ENCODE measurements at regions of chr3 and their contacts with region 1.

Region 1: GRCh38 chr3:12984023-12984823 is 89.0 kb downstream of the IQSEC1 start:
- DNase-seq: peak; percentile 80
- ATAC-seq: peak; percentile 89
- H3K4me3 Mint-ChIP-seq: no peak overlapping the region
- H3K27ac Mint-ChIP-seq: peak overlapping the region; percentile 60
- H3K4me1 Mint-ChIP-seq: peaks cover 37% of the 10 kb centered on the region
- H3K27me3 Mint-ChIP-seq: no peaks in the 10 kb centered on the region; the same call in 1 of the 2 replicates
- CTCF ChIP-seq: peak; percentile 62

Region 2: DNA sequence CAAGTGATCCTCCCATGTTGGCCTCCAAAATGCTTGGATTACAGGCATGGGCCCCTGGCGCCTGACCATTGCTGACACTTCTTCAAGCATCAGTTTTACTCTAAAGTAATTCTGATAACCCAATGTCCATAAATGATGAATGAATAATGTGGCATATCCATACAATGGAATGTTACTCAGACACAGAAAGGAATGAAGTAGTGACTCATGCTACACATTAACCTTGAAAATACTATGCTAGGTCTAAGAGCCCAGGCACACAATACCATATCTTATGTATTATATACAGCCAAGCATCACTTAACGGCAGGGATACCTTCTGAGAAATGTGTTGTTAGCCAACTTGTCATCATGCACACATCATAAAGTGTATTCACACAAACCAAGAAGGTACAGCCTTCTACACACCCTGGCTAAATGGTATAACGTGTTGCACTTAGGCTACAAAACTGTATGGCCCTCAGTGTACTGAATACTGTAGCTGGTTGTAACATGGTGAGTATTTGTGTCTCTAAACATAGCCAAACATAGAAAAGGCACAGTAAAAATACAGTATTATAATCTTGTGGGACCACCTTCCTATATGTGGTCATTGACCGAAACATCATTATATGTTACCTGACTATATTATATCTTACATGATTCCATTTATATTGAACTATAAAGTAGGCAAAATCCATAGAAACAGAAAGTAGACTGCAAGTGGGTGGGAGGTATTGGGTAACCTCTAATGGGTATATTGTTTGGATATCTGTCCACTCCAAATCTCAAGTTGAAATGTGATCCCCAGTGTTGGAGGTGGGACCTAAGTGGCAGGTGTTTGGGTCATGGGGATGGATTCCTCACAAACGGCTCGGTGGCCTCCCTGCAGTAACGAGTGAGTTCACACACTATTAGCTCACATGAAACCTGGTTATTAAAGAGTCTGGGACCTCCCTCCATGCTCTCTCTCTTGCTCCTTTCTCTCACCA is 395.9 kb before region 1 on chr3:
- CTCF ChIA-PET with region 1: no interaction called
- POLR2A ChIA-PET with region 1: no interaction called
- DNase-seq: no peak
- ATAC-seq: no peak
- H3K4me3 Mint-ChIP-seq: no peak overlapping the region
- H3K27ac Mint-ChIP-seq: no peak overlapping the region
- H3K4me1 Mint-ChIP-seq: 0 out of 2 replicates have a peak, but pooled peaks cover 3% of the 10 kb centered on the region
- H3K27me3 Mint-ChIP-seq: no peaks in the 10 kb centered on the region
- CTCF ChIP-seq: no peak

Region 3: DNA sequence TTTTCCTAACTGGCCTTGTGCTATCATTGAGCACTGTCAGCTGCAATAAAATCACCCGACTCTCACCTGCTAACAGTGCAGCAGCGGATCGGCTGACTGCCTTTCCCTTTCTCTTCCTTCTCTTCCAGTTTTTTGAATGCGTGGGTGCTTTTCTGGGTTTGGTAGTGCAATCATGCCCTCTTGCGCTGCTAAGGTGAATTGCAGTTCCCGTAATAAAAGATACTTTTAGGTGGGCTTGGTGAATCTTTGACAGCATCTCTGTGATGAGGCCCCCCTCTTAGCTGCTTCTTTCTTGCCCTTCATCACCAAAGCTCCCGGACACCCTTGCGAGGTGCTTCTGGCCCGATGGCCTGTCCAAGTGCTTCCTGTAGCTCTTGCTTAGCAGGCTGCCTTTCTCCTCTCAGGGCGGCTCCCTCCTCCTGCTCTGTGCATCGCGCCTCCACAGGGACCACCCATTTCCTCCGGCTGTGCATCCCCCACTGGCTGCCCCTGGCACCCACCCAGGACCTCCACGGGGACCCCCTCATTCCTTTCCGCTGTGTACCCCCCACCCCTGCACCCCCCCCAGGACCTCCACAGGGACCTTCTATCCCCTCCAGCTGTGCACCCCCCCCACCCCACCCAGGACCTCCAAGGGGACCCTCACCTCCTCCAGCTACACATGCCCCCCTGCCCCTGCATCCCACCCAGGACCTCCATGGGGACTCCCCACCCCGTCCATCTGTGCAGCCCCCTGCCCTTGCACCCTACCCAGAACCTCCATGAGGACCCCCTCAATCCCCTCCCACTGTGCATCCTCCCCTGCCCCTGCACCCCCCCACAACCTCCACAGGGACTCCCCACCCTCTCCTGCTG is 92.0 kb before region 1 on chr3:
- CTCF ChIA-PET with region 1: interaction called, 21 read pairs
- POLR2A ChIA-PET with region 1: no interaction called
- DNase-seq: peak; percentile 50
- ATAC-seq: peak; percentile 54
- H3K4me3 Mint-ChIP-seq: no peak overlapping the region
- H3K27ac Mint-ChIP-seq: no peak overlapping the region
- H3K4me1 Mint-ChIP-seq: peaks cover 6% of the 10 kb centered on the region; the same call in 1 of the 2 replicates
- H3K27me3 Mint-ChIP-seq: peaks cover 47% of the 10 kb centered on the region
- CTCF ChIP-seq: peak; percentile 77

Region 4: DNA sequence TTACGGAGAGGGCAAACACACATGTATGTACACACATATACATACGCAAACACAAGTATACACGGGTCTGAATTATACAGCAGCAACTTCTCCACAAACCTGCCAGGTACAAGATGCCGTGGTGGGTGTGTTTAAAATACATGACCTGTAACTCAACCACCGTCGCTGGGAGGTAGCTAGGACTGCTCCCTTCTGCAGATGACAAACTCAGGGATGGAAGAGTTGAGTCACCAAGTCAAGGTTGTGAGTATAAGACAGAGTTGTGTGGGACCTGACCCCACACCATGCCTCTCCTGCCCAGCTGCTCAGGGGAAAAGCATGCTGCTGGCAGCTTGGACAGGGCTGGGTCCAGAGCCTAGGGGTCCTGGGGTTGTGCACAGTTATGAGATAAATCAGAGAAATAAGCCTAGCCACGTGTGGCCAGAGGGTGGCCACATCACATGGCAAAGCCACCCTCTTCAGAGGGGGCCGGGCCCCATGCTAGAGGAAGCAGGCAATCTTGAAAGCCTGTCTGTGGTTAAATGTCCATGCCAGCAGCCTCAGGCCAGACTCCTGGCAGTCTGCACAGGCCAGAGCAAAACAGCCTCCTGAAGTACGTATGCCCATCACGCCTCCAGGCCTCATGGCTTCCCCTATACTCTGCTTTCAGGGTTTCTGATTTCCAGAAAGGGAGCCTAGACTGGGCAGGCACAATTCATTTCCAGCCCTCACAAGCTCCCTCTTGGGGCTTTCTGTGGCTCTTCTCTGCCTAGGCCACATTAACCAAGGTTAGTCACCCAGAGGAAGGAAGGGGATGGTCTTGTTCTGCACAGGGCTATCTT is 35.1 kb before region 1 on chr3:
- CTCF ChIA-PET with region 1: interaction called, 11 read pairs
- POLR2A ChIA-PET with region 1: no interaction called
- DNase-seq: no peak
- ATAC-seq: peak; percentile 15; the same call in 1 of the 2 replicates
- H3K4me3 Mint-ChIP-seq: no peak overlapping the region
- H3K27ac Mint-ChIP-seq: no peak overlapping the region
- H3K4me1 Mint-ChIP-seq: peaks cover 12% of the 10 kb centered on the region
- H3K27me3 Mint-ChIP-seq: no peaks in the 10 kb centered on the region
- CTCF ChIP-seq: no peak

Region 5: GRCh38 chr3:12967606-12968351 is 16.4 kb before region 1 on chr3:
- CTCF ChIA-PET with region 1: interaction called, 20 read pairs
- POLR2A ChIA-PET with region 1: interaction called, 5 read pairs
- DNase-seq: peak; percentile 84
- ATAC-seq: peak; percentile 92
- H3K4me3 Mint-ChIP-seq: peak overlapping the region; percentile 64
- H3K27ac Mint-ChIP-seq: 0 out of 2 replicates have a peak overlapping the region, but pooled peaks have one; percentile 15
- H3K4me1 Mint-ChIP-seq: peaks cover 31% of the 10 kb centered on the region
- H3K27me3 Mint-ChIP-seq: peaks cover 25% of the 10 kb centered on the region
- CTCF ChIP-seq: no peak

Region 6: GRCh38 chr3:13004376-13004775 is 20.2 kb after region 1 on chr3:
- CTCF ChIA-PET with region 1: interaction called, 14 read pairs
- POLR2A ChIA-PET with region 1: no interaction called
- DNase-seq: no peak
- ATAC-seq: peak; percentile 56; the same call in 1 of the 2 replicates
- H3K4me3 Mint-ChIP-seq: no peak overlapping the region
- H3K27ac Mint-ChIP-seq: no peak overlapping the region
- H3K4me1 Mint-ChIP-seq: peaks cover 28% of the 10 kb centered on the region
- H3K27me3 Mint-ChIP-seq: 0 out of 2 replicates have a peak, but pooled peaks cover 3% of the 10 kb centered on the region
- CTCF ChIP-seq: no peak

Region 7: DNA sequence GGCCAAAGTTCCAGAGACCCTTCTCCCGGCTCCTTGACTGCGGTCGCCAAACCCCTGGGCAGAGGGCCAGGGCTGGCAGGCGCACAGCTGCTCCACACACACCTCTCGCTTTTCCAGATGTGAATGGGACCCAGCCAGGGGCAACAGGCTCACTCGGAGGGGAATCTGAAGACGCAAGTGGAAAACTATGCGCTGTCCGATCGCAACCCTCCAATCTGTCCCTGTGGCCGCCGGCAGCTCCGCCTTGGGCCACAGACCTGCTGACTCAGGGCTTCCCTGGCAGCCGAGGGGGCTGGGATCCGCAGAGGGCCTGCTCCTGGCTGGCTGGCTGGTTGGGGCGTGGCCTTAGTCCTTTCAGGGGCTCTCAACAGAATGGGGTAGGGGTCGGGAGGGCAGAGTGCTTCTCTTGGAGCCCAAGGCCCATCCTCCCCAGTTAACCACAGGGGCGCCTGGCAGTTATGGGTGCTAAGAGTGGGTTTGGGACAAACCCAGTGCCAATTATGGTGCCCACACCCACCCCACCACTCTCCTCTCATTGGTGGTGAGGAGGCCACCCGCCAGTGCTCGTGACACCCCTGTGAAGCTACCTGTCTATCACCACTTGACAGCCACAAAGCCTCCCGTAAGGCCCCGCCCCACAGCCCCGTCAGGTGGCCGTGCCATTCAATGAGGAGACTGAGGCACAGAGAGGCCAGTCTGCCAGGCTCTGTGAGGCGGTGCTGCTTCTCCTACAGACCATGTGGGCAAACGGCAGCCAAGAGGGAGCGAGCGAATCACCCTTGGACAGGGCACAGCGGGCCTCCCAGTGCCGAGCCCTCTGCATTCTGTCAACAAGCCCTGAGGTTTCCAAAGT is 35.2 kb after region 1 on chr3:
- CTCF ChIA-PET with region 1: interaction called, 10 read pairs
- POLR2A ChIA-PET with region 1: no interaction called
- DNase-seq: peak; percentile 80
- ATAC-seq: peak; percentile 77
- H3K4me3 Mint-ChIP-seq: peak overlapping the region; percentile 47
- H3K27ac Mint-ChIP-seq: no peak overlapping the region
- H3K4me1 Mint-ChIP-seq: peaks cover 46% of the 10 kb centered on the region
- H3K27me3 Mint-ChIP-seq: no peaks in the 10 kb centered on the region
- CTCF ChIP-seq: no peak

Measured in WTC11 (cell line).